ENCODE measurements at regions of chr1 and their contacts with region 1.

Region 1: DNA sequence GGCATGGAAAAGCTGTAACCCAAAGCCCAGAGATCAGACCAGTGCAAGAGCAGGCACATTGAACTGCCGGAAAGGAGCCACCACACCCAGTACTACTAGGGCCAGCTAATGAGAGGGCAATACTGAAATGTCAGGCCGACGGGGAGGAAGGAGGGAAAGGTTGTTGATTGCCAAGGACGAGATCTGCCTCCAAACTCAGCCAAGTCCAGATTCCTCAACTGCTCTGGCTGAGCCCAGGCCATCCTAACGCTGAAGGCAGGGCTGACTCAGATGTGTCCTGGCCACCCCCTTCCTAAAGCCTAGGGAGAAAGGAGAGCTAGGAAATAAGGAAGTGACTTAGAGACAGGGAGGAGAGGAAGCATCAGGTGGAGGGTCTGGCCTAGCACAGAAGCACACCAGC is 42.1 kb upstream of the IPO9 start:
- DNase-seq: no peak
- ATAC-seq: no peak

Region 2: DNA sequence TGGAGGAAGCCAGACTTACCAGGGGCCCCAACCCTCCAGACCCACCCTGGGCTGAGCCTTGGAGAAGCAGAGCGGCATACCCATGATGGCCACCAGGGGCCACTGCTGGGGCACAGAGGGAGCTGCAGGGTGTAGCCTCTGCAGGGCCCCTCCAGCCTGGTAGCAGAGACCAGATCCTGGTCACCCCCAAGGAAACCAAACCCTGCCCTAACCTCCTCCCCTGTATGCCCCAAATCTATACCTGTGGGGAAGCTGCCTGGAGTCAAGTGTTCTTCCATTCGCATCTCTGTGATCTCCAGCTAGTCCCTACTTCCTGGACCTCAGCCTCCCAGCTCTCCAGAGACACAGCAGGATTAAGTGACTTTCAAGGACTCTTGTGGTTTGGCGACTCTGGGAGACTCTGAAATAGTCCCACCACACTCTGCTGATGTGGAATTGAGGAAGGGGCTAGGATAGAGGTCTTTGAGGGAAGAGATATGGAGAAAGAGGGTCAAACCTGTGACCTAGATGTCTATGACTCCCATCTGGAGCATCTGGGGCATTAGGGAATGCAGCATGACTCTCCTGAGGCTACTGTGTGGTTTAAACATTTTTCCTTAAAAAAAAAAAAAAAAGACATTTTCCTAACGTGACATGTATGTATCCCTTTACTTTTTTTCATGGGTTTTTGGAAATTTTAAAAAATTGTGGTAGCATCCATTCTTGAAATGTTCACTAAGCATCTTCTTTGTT is 77.1 kb before region 1 on chr1:
- intact Hi-C with region 1: loop called (anchors 2 to 5 kb)
- DNase-seq: peak in 1 of 2 donors; percentile 77
- ATAC-seq: peak; percentile 67